Psoas muscle (tissue), 8 donors: ENCODE measurements at regions of chr1 and their contacts with region 1.

Region 1: DNA sequence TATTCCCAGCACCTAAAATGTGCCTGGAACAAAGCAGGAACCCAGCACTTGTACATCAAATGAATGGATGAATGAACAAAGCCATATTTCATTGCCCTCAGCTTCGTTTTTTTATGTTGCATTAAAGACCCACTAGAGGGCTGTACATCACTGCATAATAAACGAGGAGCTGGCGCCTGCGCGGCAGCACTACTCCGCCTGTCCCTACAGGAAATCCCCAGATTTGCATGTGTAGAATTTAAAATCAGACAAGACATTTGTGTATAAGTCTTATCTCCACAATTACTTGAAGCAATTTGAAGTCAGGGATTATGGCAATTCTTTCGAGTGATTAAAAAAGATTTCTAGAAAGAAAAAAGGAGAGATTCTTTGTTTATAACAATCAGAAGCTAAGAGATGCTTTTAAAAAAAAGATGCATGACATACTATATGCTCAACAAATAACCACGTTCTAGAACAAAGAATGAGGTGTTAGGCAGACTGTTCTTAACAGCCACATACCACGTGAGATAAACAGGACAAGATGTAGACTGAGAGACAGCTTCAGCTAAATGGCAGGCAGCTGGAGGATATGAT is 5.4 kb upstream of the NEK2 start:
- DNase-seq: peak; percentile 59 to 81
- ATAC-seq: peak; percentile 84 to 97 (median 92)
- H3K4me3 ChIP-seq: no peak overlapping the region
- H3K27ac ChIP-seq: no peak overlapping the region
- H3K4me1 ChIP-seq: no peaks in the 10 kb centered on the region
- H3K27me3 ChIP-seq: no peaks in the 10 kb centered on the region
- CTCF ChIP-seq: peak; percentile 73

Region 2: DNA sequence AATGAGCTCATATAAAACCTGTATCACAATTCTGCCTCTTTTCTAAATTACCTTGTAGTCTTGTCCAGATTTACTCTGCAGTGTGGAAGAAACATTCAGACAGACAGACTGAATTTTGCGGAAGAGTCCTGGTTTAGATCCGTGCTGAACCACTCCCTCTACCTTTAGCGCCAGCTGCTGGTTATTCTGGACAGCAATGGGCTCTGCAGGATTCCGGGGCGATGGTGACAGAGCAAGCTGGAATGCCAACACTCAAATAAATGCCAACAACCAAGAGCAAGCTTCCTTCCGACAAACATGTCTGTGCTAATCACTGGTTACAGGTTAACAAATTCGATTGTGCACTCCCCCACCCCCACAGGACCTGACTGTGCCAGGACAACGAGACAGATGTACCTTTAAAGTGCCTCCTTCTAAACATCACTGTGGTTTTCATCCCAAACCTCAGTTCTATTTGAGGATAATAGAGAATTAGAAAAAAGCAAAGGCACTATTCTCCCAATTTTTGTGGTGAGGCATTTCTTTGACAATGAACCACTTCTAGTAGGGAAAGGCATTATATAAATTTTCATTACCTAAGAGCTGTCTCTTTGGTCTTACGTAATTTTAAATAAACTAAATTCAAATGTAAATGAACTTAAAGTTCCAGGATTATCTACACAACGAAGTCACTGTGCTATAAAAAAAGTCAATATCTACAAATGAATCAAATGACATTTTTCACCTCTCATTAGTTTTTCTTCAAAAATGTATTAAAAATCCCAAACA is 264.1 kb after region 1 on chr1:
- intact Hi-C with region 1: loop called (anchors 5 to 10 kb)
- DNase-seq: no peak
- ATAC-seq: peak; percentile 51 to 78 (median 64)
- H3K4me3 ChIP-seq: no peak overlapping the region
- H3K27ac ChIP-seq: no peak overlapping the region
- H3K4me1 ChIP-seq: no peaks in the 10 kb centered on the region
- H3K27me3 ChIP-seq: no peaks in the 10 kb centered on the region
- CTCF ChIP-seq: peak; percentile 18

Region 3: DNA sequence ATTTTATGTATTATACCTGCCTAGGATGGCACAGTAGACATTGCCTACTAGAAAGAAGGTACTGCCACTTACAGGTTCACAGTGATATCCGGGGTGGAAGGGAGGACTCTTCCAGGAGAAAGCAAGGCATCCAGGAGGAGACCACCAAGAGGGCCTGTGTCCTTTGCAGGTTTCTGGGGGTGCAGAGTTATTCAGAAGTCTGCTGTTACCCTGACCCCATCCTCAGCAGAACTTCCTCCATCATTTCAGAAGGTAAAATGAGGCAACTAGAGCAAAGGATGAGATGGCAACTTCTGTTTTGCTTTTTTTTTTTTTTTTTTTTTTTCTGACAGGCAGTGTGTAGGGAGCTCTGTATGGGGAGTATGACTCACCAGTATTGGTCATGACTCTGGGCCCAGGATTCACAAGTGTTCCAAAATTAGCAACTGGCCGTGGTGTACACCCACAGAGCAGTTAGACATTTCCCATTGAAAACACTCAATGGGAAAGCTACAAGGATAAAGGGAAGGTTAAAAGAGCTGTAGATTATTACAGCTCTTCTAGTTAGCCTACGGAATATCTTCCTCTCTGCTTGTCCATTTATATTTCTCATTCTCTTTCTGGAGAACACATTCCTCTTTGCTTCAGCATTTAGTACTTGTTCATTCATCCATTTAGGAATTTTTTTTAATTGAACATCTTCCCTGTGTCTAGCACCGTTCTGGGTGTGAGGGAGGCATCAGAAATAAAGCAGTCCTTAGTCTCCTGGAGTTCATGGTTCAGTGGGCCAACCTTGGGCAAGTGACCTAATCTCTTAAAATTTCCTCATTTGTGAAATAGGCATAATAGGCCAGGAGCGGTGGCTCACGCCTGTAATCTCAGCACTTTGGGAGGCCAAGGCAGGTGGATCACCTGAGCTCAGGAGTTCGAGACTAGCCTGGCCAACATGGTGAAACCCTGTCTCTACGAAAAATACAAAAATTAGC is 553.9 kb after region 1 on chr1:
- intact Hi-C with region 1: no loop called
- DNase-seq: peak; percentile 26 to 61
- ATAC-seq: peak; percentile 95 to 98 (median 96)
- H3K4me3 ChIP-seq: no peak overlapping the region
- H3K27ac ChIP-seq: peak overlapping the region; percentile 90
- H3K4me1 ChIP-seq: peaks cover 60% of the 10 kb centered on the region
- H3K27me3 ChIP-seq: no peaks in the 10 kb centered on the region
- CTCF ChIP-seq: no peak